ENCODE measurements at regions of chr4 and their contacts with region 1.

Region 1: DNA sequence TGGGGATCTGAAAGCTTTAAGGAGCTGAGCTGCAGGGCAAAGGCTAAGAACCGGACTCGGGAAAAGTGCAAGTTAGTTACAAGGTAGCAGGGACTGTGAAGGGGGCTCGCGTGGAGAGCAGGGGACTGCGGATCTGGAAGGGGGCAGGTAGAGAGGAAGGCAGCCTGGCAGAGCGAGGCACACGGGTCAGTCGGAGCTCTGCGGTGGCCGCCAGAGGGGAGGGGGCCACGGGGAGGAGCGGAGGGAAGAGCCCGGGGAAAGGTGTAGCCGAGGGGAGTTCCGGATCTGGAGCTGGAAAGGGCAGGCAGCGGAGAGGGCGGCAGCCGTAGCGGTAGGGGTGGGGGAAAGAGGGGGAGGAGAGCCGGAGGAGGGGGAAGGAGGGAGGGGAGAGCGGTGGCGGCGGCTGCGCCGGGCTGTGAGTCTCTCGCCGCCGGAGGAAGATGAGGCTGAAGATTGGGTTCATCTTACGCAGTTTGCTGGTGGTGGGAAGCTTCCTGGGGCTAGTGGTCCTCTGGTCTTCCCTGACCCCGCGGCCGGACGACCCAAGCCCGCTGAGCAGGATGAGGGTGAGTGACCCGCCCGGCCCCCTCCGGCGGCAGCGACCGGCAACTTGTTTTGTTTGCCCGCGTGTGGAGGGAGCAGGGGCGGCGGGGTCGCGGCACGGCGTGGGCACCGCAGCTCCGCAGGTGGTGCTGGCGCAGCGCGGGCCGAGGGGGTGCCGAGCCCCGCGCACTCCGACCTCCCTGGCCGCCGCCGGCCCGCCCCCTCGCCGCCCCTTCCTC is at the start of gene GALNT7:
- DNase-seq: peak; percentile 66 to 68
- ATAC-seq: peak; percentile 59 to 84 (median 74)
- H3K4me3 ChIP-seq: peak within 1 kb of the TSS; percentile 45 to 84 (median 78)
- H3K27ac ChIP-seq: peak within 1 kb of the TSS; percentile 79 to 96 (median 90)
- H3K4me1 ChIP-seq: peaks cover 3 to 32% (median 15%) of the 10 kb centered on the region in 9 donors
- H3K27me3 ChIP-seq: no peaks in the 10 kb centered on the region
- CTCF ChIP-seq: no peak
- total RNA-seq, gene GALNT7: 2.6 to 8.8 (median 5.7) TPM

Region 2: DNA sequence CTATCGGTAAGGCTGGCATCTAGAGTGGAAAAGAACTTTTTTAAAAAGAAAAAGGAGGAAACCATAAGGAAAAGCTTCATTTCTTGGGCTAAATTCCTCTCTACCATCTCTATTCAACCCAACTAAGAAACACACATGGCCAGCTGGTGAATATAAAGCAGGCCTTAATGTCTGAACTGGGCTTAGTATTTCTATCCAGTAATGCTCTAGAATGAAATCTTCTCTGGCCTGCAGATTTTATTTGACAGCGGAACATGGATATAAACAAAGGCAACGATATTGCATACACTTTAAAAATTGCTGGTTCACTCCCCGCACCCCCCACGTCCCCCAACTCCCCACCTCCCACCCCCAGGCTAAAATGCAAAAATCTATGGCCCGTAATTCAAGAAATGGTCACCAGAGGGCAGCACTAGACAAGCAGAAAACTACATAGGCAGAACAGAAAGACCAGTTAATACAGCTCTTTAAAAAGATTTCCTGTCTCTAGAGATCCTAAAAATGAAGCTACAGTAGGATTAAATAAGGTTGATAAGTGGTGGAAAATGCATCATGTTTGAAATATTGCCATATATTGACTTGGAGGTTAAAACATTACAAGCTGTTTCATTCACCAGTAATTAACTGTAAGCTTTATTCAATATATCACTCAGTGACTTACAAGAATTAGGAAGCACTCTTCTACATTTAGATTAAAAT is 155.2 kb before region 1 on chr4:
- intact Hi-C with region 1: loop called in 1 of 10 experiments (anchors 10 kb)
- DNase-seq: peak in 1 of 2 donors; percentile 38
- ATAC-seq: peak in 7 of 8 donors; percentile 31 to 80 (median 67)
- H3K4me3 ChIP-seq: no peak overlapping the region
- H3K27ac ChIP-seq: peak overlapping the region in 1 of 10 donors; percentile 22
- H3K4me1 ChIP-seq: peaks cover 0 to 12% (median 0%) of the 10 kb centered on the region in 9 donors
- H3K27me3 ChIP-seq: no peaks in the 10 kb centered on the region
- CTCF ChIP-seq: peak; percentile 48 to 77 (median 70)

Region 3: DNA sequence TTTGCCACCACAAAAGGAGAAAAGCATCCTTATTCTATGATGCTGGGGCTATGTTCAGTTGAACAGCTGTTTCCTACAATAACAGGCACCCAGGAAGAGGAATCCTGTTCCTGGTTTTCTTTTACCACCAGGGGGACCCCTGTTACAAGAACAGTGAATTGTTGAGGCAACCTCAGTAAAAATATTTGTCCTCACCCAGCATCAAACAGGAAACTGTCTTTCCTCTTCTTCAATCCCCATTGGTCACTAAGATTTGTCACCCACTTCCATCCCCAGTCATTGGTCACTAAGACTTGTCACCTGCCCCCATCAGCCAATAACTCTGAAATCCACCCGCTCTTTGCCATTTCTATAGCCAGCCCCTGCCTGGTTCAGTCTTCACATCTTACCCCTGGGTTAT is 143.5 kb before region 1 on chr4:
- intact Hi-C with region 1: loop called in 2 of 10 experiments (anchors 10 kb)
- DNase-seq: peak in 1 of 2 donors; percentile 72
- ATAC-seq: peak in 7 of 8 donors; percentile 69 to 84 (median 80)
- H3K4me3 ChIP-seq: no peak overlapping the region
- H3K27ac ChIP-seq: no peak overlapping the region
- H3K4me1 ChIP-seq: peaks cover 0 to 8% (median 0%) of the 10 kb centered on the region in 9 donors
- H3K27me3 ChIP-seq: no peaks in the 10 kb centered on the region
- CTCF ChIP-seq: peak; percentile 38 to 77 (median 71)

Region 4: DNA sequence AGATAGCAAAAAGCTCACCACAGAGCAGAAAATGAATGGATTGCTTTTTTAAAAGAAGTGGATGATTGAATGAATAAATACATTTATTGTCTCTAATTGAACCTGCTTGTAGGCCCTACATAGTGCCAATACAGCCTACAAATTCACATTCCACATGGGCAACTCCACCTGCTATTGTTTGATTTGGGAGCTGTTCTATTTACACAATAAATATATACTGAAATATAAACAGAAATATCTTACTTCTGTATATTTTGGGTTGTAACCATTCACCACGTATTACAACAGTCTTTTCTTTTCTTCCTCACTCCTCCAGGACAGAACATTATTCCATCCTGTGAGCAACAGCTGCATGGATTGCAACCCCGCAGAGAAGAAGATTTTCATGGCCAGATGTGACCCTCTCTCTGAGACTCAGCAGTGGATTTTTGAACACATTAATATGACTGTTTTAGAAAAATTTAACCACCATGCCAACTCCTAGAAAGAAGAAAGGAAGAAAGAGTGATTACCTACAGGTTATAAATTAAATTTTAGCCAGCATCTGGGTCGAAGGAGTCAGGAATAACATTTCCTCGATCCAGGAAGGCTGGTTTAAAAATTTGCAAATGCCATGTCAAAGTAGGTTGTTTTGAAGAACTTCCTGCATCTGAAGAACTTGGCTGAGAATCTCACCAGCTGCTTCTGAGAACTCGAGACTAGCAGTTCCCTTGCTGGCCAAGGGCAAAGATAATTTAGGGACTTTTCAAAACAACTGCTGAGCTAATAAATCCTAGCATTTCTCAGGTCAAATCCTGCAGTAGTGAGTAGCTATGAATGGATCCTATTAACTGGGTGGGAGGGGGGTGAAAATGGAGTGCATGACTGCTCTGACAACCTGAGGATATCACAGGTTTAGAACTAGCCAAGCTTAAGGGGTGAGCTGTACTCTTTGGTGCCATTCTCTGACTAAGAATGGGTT is 128.7 kb before region 1 on chr4:
- intact Hi-C with region 1: loop called in 1 of 10 experiments (anchors 5 kb)
- DNase-seq: peak in 1 of 2 donors; percentile 36
- ATAC-seq: peak in 7 of 8 donors; percentile 52 to 88 (median 78)
- H3K4me3 ChIP-seq: peak overlapping the region in 2 of 10 donors; percentile 5 to 18
- H3K27ac ChIP-seq: peak overlapping the region in 8 of 10 donors; percentile 27 to 68 (median 40)
- H3K4me1 ChIP-seq: peaks cover 0 to 29% (median 15%) of the 10 kb centered on the region in 9 donors
- H3K27me3 ChIP-seq: peaks cover 0 to 5% (median 0%) of the 10 kb centered on the region in 7 donors
- CTCF ChIP-seq: no peak

Region 5: DNA sequence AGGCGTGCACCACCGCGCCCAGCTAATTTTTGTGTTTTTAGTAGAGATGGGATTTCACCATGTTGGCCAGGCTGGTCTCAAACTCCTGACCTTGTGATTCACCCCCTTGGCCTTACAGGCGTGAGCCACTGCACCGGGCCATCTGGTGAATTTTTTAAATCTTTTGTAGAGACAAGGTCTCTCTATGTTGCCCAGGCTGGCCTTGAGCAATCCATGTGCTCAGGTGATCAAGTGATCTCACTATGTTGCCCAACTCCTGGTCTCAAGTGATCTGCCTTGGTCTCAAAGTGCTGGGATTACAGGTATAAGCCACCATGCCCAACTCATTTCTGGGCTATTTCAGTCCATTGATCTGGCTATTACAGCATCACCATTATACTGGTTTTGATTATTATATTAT is 22.1 kb before region 1 on chr4:
- intact Hi-C with region 1: loop called in 1 of 10 experiments (anchors 1 kb)
- DNase-seq: no peak
- ATAC-seq: no peak
- H3K4me3 ChIP-seq: no peak overlapping the region
- H3K27ac ChIP-seq: no peak overlapping the region
- H3K4me1 ChIP-seq: no peaks in the 10 kb centered on the region
- H3K27me3 ChIP-seq: no peaks in the 10 kb centered on the region
- CTCF ChIP-seq: no peak

Region 6: GRCh38 chr4:173231916-173232315 is 63.3 kb after region 1 on chr4:
- intact Hi-C with region 1: loop called in 3 of 10 experiments (anchors 5 to 10 kb)
- DNase-seq: no peak
- ATAC-seq: peak in 6 of 8 donors; percentile 46 to 66 (median 56)
- H3K4me3 ChIP-seq: no peak overlapping the region
- H3K27ac ChIP-seq: peak overlapping the region in 1 of 10 donors; percentile 3
- H3K4me1 ChIP-seq: peaks cover 0 to 23% (median 12%) of the 10 kb centered on the region in 9 donors
- H3K27me3 ChIP-seq: no peaks in the 10 kb centered on the region
- CTCF ChIP-seq: peak in 6 of 9 donors; percentile 14 to 45 (median 29)

Region 7: DNA sequence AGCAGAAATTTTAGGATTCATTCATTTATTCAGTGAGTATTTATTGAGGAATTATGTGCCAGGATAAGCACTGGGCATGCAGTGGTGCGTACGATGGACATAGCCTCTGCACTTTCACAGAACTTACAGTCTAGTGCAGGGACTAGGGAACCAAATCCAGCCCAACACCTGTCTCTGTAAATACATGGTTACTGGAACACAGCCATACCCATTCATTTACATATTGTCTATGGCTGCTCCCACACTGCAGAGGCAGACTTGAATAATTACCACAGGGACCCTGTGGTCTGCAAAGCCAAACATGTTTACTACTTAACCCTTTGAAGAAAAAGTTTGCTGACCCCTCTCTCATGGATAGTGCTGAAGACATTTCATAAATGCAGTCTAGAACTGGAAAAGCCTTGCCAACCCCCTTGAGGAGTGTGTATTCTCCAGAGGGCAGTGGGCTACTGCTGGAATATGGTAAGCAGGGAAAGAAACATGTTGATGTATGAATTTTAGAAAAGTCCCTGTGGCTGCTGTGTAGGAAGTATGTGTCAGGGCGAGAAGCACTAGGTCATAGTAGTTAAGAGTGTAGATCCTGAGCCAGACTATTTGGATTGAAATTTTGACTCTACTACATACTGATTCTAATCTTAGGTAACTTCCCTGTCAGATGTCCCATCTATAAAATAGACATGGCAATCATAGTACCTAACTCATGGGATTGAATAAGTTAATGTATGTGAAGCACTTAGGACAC is 75.5 kb after region 1 on chr4:
- intact Hi-C with region 1: loop called in 3 of 10 experiments (anchors 10 kb)
- DNase-seq: no peak
- ATAC-seq: no peak
- H3K4me3 ChIP-seq: no peak overlapping the region
- H3K27ac ChIP-seq: no peak overlapping the region
- H3K4me1 ChIP-seq: peaks cover 0 to 3% (median 0%) of the 10 kb centered on the region in 9 donors
- H3K27me3 ChIP-seq: no peaks in the 10 kb centered on the region
- CTCF ChIP-seq: no peak

Measured in heart right ventricle (tissue), 16 donors.